ENCODE measurements at regions of chr4 and their contacts with region 1.

Region 1: DNA sequence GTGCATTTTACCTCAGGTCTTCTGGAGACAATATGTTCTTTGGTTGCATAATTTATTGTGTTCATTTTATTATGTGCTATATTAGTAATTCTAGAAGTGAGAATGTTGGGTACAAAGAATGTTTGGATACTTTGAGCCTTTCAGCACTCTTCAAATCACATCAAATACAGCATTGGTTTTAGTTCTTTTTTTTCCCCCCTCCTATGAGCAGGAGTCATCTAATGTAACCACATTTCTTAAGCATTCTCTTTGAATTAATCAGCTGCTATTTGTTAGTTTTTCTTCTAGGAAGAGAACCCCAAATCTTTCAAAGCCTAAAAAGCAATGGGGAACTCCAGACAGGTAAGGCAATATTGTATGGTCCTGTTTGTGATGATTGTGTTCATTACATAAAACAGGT is 46.7 kb downstream of the ARL9 start:
- DNase-seq: no peak
- ATAC-seq: no peak
- H3K4me3 ChIP-seq: no peak overlapping the region
- H3K4me3 Mint-ChIP-seq: no peak overlapping the region
- H3K27ac ChIP-seq: no peak overlapping the region
- H3K27ac Mint-ChIP-seq: no peak overlapping the region
- H3K4me1 ChIP-seq: no peaks in the 10 kb centered on the region
- H3K4me1 Mint-ChIP-seq: peaks cover 5 to 13% (median 6%) of the 10 kb centered on the region in 3 donors
- H3K27me3 ChIP-seq: no peaks in the 10 kb centered on the region
- H3K27me3 Mint-ChIP-seq: peaks cover 0 to 4% of the 10 kb centered on the region in 2 donors

Region 2: DNA sequence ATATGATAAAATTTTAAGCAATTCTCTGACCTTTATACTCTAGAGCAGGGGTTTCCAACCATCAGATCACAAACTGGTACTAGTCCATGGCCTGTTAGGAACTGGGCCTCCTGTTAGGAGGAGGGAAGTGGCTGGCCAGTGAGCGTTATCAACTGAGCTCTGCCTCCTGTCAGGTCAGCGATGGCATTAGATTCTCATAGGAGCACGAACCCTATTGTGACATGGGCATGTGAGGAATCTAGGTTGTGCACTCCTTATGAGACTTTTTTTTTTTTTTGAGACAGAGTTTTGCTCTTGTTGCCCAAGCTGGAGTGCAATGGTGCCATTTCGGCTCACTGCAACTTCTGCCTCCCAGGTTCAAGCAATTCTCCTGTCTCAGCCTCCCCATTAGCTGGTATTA is 261.1 kb after region 1 on chr4:
- CTCF ChIA-PET with region 1: interaction called in 1 of 2 experiments, 11 read pairs
- POLR2A ChIA-PET with region 1: no interaction called
- DNase-seq: no peak
- ATAC-seq: no peak
- H3K4me3 ChIP-seq: no peak overlapping the region
- H3K4me3 Mint-ChIP-seq: no peak overlapping the region
- H3K27ac ChIP-seq: no peak overlapping the region
- H3K27ac Mint-ChIP-seq: no peak overlapping the region
- H3K4me1 ChIP-seq: peaks cover 8 to 10% of the 10 kb centered on the region in 2 experiments
- H3K4me1 Mint-ChIP-seq: peaks cover 13% of the 10 kb centered on the region in 3 donors
- H3K27me3 ChIP-seq: no peaks in the 10 kb centered on the region
- H3K27me3 Mint-ChIP-seq: no peaks in the 10 kb centered on the region